Ovary (tissue), 10 donors: ENCODE measurements at regions of chr5 and their contacts with region 1.

Region 1: GRCh38 chr5:66312291-66312690 is 168.2 kb downstream of the SREK1 start:
- DNase-seq: no peak
- H3K4me3 ChIP-seq: no peak overlapping the region
- H3K27ac ChIP-seq: no peak overlapping the region
- H3K4me1 ChIP-seq: no peaks in the 10 kb centered on the region
- H3K27me3 ChIP-seq: no peaks in the 10 kb centered on the region
- CTCF ChIP-seq: no peak
- EP300 ChIP-seq: no peak
- POLR2A ChIP-seq: no peak

Region 2: GRCh38 chr5:66426259-66427138 is 114.2 kb after region 1 on chr5:
- intact Hi-C with region 1: loop called in 1 of 4 experiments (anchors 10 kb)
- DNase-seq: no peak
- H3K4me3 ChIP-seq: no peak overlapping the region
- H3K27ac ChIP-seq: no peak overlapping the region
- H3K4me1 ChIP-seq: peaks cover 6% of the 10 kb centered on the region
- H3K27me3 ChIP-seq: no peaks in the 10 kb centered on the region
- CTCF ChIP-seq: no peak
- EP300 ChIP-seq: no peak
- POLR2A ChIP-seq: no peak